Posterior vena cava (tissue), 2 donors: ENCODE measurements at regions of chr3 and their contacts with region 1.

Region 1: DNA sequence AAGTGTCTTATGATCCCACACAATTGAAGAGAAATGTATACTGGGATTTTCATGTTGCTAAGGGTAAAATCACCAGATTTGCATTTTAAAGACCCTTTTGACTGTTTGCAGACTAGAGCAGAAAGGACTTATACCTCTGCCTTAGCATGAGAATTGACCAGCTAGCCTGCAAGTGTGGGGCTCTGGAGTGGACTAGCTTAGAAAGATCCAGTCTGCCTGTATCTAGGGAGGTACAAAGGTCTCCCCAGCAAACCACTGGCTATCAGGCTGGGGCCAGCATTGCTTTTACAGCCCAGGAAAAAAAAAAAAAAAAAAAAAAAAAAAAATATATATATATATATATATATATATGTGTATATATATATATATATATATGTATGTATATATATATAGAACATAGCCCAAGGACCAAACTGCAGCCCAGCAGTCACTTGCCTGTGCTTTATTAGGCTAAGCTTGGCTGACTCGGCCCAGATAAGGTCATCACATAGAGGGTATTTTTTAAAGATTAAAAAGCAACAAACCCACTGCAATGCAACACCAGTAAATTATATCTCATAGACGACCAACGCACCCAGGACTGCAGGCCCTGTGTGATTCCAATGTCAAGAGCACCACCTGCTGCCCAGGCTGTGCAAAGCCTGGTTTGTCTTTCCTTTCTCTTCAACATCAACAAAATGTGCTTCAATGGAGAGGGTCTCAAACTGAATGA is 63.7 kb downstream of the DCLK3 start:
- DNase-seq: no peak

Region 2: GRCh38 chr3:35965908-35966307 is 734.8 kb before region 1 on chr3:
- intact Hi-C with region 1: loop called (anchors 5 to 10 kb)
- DNase-seq: no peak

Region 3: DNA sequence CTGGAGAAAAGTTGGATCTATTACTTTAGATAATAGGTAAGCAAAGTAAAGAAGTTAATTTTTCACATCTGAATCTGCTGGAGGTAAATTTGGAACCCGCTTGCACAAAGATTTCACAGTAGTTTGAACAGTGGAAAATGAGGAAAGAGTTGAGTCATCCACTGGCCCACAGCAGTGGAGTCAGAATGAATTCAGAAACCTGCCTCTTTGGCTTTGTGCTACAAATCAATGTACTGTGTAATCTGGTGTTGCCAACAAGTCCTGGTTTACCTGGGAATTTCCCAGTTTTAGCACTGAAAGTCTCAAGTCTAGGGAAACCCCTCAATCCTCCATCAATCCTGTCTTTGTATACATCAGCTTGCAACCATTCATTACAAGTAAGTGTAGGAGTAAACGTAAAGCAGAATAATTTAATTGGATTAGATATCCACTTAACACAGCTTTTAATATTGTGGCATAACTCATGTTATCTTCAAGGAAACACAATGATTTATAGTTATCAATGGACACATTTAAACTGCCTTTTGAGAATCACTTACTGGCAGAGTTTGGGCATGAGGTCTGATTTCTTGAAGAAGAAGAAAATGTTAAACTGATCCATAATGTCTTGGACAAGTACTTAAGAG is 36.9 kb before region 1 on chr3:
- intact Hi-C with region 1: no loop called
- DNase-seq: no peak